ENCODE measurements at regions of chr18 and their contacts with region 1.

Region 1: GRCh38 chr18:25921677-25922421 is 168.6 kb downstream of the SS18 start:
- DNase-seq: peak; percentile 23
- H3K4me3 Mint-ChIP-seq: no peak overlapping the region
- H3K27ac Mint-ChIP-seq: no peak overlapping the region
- H3K4me1 Mint-ChIP-seq: peaks cover 7% of the 10 kb centered on the region
- H3K27me3 Mint-ChIP-seq: peaks cover 8% of the 10 kb centered on the region

Region 2: DNA sequence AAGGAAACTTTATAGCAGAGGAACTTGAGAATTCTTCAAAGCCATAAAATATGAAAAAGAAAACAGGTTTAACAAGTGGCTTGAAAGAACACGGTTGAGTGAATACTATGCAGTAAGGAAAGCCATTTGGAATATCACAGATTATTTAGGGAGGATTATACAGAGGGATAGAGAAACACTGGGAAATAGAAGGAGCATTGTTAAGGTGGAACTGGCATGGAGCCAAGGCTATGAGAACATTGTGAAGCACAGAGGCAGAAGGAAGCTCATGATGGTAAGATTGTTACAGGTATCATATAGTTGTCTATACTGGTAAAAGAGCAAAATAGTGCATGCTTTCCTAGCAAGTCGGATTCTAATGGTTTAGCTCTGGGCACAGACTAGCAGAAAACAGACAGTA is 81.5 kb after region 1 on chr18:
- intact Hi-C with region 1: no loop called
- DNase-seq: no peak
- H3K4me3 Mint-ChIP-seq: no peak overlapping the region
- H3K27ac Mint-ChIP-seq: no peak overlapping the region
- H3K4me1 Mint-ChIP-seq: no peaks in the 10 kb centered on the region
- H3K27me3 Mint-ChIP-seq: no peaks in the 10 kb centered on the region

Region 3: GRCh38 chr18:26159353-26159752 is 237.5 kb after region 1 on chr18:
- intact Hi-C with region 1: loop called (anchors 1 kb)
- DNase-seq: no peak
- H3K4me3 Mint-ChIP-seq: no peak overlapping the region
- H3K27ac Mint-ChIP-seq: no peak overlapping the region
- H3K4me1 Mint-ChIP-seq: no peaks in the 10 kb centered on the region
- H3K27me3 Mint-ChIP-seq: peaks cover 13% of the 10 kb centered on the region

Region 4: GRCh38 chr18:26655525-26656430 is 733.9 kb after region 1 on chr18:
- intact Hi-C with region 1: loop called (anchors 5 kb)
- DNase-seq: no peak
- H3K4me3 Mint-ChIP-seq: peak overlapping the region; percentile 41
- H3K27ac Mint-ChIP-seq: no peak overlapping the region
- H3K4me1 Mint-ChIP-seq: peaks cover 18% of the 10 kb centered on the region
- H3K27me3 Mint-ChIP-seq: peaks cover 77% of the 10 kb centered on the region

Measured in activated T-helper 1 cell treated with anti-CD3 and anti-CD28 coated beads, Interleukin-12 subunit alpha, Interleukin-12 subunit beta, Interleukin-2, Interleukin-4 antibody, amounts not matched to agents 30 ng/mL and 10 ng/mL and 1 ng/mL, durations not matched to agents 14 hours and 24 hours and 36 hours (primary cell).